Psoas muscle (tissue), 8 donors: ENCODE measurements at regions of chr1 and their contacts with region 1.

Region 1: DNA sequence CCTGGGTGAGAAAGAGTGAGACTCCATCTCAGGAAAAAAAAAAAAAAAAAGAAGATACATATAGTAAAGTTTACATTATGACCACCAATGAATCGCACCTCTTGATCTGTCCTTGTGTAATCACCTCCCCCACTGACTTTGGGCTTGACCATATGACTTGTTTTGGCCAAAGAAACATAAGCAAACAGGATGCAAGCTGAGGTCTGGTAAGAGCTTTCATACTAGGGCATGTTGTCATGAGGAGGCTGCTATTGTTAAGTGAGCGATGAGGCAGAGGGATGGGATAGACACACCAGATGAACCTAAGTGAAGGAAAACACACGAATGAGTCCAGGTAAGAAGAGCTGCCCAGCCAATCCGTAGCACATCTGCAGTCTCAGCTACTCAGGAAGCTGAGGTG is 10.7 kb downstream of the ENAH start:
- DNase-seq: no peak
- ATAC-seq: peak in 2 of 4 donors; percentile 38
- H3K4me3 ChIP-seq: no peak overlapping the region
- H3K27ac ChIP-seq: no peak overlapping the region
- H3K4me1 ChIP-seq: peaks cover 34% of the 10 kb centered on the region
- H3K27me3 ChIP-seq: no peaks in the 10 kb centered on the region
- CTCF ChIP-seq: no peak

Region 2: GRCh38 chr1:225548140-225548857 is 93.9 kb before region 1 on chr1:
- intact Hi-C with region 1: loop called in 1 of 2 experiments (anchors 10 kb)
- DNase-seq: no peak
- ATAC-seq: no peak
- H3K4me3 ChIP-seq: no peak overlapping the region
- H3K27ac ChIP-seq: no peak overlapping the region
- H3K4me1 ChIP-seq: peaks cover 18% of the 10 kb centered on the region
- H3K27me3 ChIP-seq: no peaks in the 10 kb centered on the region
- CTCF ChIP-seq: no peak

Region 3: DNA sequence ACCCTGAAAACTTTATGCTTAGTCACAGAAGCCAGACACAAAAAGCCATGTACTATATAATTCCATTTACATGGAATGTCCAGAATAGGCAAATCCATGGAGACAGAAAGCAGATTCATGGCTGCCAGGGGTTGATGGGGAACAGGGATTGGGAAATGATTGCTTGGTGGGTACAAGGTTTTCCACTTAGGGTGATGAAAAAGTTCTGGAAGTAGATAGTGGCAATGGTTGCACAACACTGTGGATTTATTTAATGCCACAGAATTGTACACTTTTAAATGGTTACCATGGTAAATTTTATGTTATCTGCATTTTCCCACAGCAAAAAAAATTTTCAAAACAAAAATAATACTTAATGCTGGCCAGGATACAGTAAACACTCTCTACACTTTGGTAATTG is 29.9 kb before region 1 on chr1:
- intact Hi-C with region 1: loop called (anchors 5 kb)
- DNase-seq: no peak
- ATAC-seq: no peak
- H3K4me3 ChIP-seq: no peak overlapping the region
- H3K27ac ChIP-seq: no peak overlapping the region
- H3K4me1 ChIP-seq: peaks cover 18% of the 10 kb centered on the region
- H3K27me3 ChIP-seq: no peaks in the 10 kb centered on the region
- CTCF ChIP-seq: no peak

Region 4: GRCh38 chr1:225777583-225778336 is 135.6 kb after region 1 on chr1 and contains the start of gene SRP9:
- intact Hi-C with region 1: no loop called
- DNase-seq: peak; percentile 99 to 100
- ATAC-seq: peak; percentile 99 to 100 (median 100)
- H3K4me3 ChIP-seq: peak within 1 kb of the TSS; percentile 76
- H3K27ac ChIP-seq: peak within 1 kb of the TSS; percentile 89
- H3K4me1 ChIP-seq: peaks cover 40% of the 10 kb centered on the region
- H3K27me3 ChIP-seq: no peaks in the 10 kb centered on the region
- CTCF ChIP-seq: peak; percentile 82
- total RNA-seq, gene SRP9: 137 to 199 (median 154) TPM